ENCODE measurements at regions of chr10 and their contacts with region 1.

Region 1: DNA sequence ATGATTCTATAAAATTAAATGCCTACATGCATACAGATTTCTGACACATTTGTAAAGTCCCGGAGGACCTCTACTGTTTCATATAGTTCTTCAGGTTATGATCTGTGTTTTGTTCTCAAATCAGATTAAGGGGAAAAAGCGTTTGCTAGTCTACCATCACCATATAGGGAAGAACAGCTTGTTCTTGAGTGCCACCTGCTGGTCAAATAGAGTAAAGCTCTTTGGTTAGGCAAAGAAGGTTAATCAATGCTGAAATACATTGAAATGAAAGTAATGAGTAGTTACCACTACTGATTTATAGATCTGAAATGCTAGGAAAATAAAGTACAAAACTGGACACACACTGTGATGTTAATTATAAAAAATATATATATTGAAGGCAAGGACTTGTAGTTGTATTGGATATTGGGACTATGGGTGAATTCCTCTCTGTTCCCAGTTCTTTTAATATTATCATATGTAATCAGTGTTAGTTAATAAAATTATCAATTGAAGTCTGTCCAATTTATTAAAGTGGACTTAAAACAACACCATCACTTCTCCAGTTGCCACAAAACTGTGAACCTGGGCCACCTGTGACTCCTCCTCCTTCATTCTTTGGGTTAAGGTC is 72.6 kb upstream of the PDLIM1 start:
- DNase-seq: peak; percentile 60
- H3K4me3 ChIP-seq: no peak overlapping the region
- H3K27ac ChIP-seq: no peak overlapping the region
- H3K4me1 ChIP-seq: no peaks in the 10 kb centered on the region
- H3K27me3 ChIP-seq: no peaks in the 10 kb centered on the region
- CTCF ChIP-seq: peak; percentile 57 to 87 (median 83)
- POLR2A ChIP-seq: no peak

Region 2: DNA sequence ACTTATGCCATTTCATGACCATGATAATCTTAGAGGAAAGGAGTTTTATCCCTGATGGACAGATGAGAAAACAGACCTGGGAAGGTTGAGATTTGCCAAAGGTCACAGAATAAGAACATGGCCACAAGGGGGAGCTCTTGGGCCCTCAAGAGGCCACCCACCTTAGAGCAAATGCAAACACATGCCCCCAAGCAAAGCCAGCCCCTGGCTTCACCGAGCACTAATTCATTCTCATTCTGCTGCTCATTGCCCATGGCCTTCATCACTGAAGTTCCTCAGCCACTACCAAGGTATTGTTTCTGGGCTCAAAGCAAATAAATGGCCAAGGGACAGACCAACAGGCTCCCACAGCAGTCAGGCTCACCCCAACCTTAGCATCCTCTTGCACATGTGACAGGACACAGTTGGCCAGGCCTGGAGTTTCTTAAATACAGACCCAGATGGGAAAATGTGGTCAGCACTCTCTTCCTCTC is 116.8 kb before region 1 on chr10:
- intact Hi-C with region 1: loop called (anchors 10 kb)
- DNase-seq: peak; percentile 89
- H3K4me3 ChIP-seq: no peak overlapping the region
- H3K27ac ChIP-seq: no peak overlapping the region
- H3K4me1 ChIP-seq: peaks cover 7% of the 10 kb centered on the region
- H3K27me3 ChIP-seq: no peaks in the 10 kb centered on the region
- CTCF ChIP-seq: peak; percentile 40 to 83 (median 57)
- POLR2A ChIP-seq: no peak

Region 3: DNA sequence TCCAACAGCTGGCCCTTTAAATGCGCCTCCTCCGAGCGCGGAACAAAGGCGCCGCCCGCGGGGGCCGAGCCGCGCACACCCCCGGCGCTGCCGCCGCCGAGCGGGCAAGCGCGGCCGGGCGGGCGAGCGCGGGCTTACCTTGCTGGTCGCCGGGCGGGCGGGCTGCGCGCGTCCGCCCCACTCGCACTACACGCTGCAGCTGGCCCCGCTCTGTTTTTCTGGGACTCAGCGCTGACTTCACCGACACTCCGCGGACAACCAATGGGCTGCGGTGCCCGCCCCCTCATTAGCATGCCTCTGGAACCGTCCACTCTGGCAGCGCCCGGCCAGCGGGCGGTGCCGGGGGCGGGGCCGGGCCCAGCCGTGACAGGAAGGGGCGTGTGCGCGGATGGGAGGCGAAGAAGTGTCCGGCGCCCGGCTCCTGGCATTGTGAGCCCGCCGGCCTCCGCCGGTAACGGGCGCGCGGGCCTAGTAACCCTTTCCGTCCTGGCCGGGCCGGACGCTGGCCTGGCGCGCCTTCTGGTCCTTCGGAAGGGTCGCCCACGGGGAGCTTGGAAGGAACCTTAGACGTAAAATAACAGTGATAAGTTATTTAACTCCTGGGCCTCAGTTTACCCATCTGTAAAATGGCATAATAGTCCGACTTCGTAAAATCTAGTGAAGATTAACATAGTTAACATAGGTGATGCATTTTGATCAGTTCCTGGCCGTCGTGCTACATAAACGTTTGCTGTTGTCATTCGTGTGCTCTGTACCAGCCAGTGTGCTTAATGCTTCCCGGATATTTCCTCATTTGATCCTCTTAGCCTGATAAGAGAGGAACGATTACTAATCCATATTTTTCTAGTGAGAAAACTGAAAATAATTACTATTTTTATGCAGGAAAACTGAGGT is 198.0 kb after region 1 on chr10 and contains the start of gene SORBS1:
- intact Hi-C with region 1: no loop called
- DNase-seq: peak; percentile 97
- H3K4me3 ChIP-seq: peak within 1 kb of the TSS; percentile 81 to 91
- H3K27ac ChIP-seq: peak within 1 kb of the TSS; percentile 81 to 85
- H3K4me1 ChIP-seq: peaks cover 13% of the 10 kb centered on the region
- H3K27me3 ChIP-seq: no peaks in the 10 kb centered on the region
- CTCF ChIP-seq: no peak
- POLR2A ChIP-seq: peak; percentile 94
- total RNA-seq, gene SORBS1: 34.4 to 38.8 TPM